MCF 10A (cell line): ENCODE measurements at regions of chr2 and their contacts with region 1.

Region 1: GRCh38 chr2:86368161-86368824 is 30.9 kb upstream of the REEP1 start:
- DNase-seq: peak; percentile 50
- H3K4me3 Mint-ChIP-seq: peak overlapping the region; percentile 12
- H3K27ac Mint-ChIP-seq: no peak overlapping the region
- H3K4me1 Mint-ChIP-seq: no peaks in the 10 kb centered on the region
- H3K27me3 Mint-ChIP-seq: no peaks in the 10 kb centered on the region
- CTCF ChIP-seq: peak; percentile 40

Region 2: DNA sequence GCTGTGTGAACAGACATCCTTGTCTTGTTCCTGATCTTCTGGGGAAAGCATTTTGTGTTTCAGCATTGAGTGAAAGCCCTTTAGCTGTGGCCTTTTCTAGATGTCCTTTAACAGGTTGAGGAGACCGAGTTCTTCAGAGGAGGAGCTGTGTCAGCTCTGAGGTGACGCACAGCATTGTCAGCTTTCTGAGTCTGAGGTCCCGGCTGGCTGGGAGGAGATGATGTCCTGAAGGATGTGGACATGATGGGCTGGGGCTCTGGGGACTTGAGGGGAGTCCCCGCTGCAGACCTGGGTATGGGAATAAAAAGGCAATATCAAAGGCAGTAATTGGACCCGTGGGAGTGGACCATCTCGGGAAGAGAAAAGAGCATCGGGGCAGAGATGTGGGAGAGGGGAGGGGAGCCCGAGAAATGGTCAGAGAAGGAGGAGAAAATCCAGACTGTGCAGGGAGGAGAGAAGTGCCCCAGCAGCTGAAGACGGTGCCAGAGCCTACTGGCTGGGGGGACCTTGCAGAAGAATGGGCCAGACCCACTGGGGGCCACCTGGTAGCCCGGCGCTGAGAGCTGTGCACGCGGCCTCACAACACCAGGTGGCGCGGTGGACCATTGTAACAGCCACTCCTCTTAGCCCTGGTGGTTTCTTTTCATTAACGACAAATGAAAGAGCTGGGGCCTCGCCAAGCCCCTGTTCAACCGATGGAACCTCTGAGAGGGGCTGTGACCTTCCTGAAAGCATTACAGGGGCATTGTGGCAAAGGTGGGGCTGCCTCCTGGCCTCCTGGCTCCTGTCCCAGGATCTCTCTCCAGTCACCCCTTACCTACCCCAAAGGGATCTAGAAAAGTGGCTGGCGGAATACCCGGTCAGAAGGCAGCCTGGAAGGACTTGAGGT is 541.1 kb before region 1 on chr2:
- CTCF ChIA-PET with region 1: no interaction called
- POLR2A ChIA-PET with region 1: no interaction called
- intact Hi-C with region 1: loop called (anchors 5 kb)
- DNase-seq: peak; percentile 74
- H3K4me3 Mint-ChIP-seq: no peak overlapping the region
- H3K27ac Mint-ChIP-seq: no peak overlapping the region
- H3K4me1 Mint-ChIP-seq: peaks cover 5% of the 10 kb centered on the region
- H3K27me3 Mint-ChIP-seq: peaks cover 7% of the 10 kb centered on the region
- CTCF ChIP-seq: peak; percentile 90

Region 3: DNA sequence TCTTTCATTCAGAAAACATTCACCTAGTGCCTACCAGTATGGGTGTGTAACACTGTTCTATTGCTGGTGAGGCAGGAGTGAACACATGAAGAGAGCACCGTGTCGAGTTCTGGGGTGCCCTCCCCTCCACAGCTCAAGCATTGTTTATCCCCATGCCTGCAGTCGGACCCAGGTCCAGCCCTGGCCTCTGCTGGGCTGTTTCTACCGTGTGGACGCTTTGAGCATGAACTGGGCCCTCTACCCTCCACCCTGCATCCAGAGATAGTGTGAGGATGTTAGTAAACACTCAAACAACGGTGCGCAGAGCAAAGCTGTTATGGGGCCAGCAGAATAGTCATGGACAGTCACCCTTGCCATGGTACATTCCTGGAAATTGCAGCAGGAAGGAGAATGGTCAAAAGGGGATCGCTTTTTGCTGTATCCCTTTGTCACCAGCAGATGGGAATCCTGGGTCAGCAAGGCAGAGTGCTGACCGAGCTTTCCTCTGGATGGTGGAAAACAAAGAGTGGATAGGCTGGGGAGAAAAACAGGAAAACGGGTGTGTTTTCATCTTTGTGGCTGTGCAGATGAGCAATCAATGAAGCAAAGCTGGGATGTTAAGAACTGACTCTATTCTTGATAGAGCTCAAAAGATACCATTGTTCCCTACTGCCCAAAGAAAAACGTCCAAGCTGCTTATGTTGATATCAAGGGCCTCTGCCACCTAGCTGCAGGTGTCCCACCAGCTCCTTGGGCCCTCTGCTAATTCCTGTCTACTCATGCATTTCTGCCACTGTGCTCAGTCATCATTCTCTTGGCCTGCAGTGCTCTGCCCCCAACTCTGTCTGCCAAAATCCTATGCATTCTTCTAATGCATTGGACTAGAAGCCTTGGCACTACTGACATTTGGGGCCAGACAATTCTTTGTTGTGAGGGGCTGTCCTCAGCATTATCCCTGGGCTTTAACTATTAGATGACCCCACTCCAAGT is 69.6 kb before region 1 on chr2:
- CTCF ChIA-PET with region 1: no interaction called
- POLR2A ChIA-PET with region 1: no interaction called
- intact Hi-C with region 1: loop called (anchors 10 kb)
- DNase-seq: no peak
- H3K4me3 Mint-ChIP-seq: no peak overlapping the region
- H3K27ac Mint-ChIP-seq: no peak overlapping the region
- H3K4me1 Mint-ChIP-seq: no peaks in the 10 kb centered on the region
- H3K27me3 Mint-ChIP-seq: peaks cover 10% of the 10 kb centered on the region
- CTCF ChIP-seq: peak; percentile 10

Region 4: GRCh38 chr2:86383844-86384243 is 15.6 kb after region 1 on chr2:
- CTCF ChIA-PET with region 1: interaction called, 14 read pairs
- POLR2A ChIA-PET with region 1: no interaction called
- intact Hi-C with region 1: no loop called
- DNase-seq: peak; percentile 90
- H3K4me3 Mint-ChIP-seq: no peak overlapping the region
- H3K27ac Mint-ChIP-seq: no peak overlapping the region
- H3K4me1 Mint-ChIP-seq: peaks cover 10% of the 10 kb centered on the region
- H3K27me3 Mint-ChIP-seq: peaks cover 21% of the 10 kb centered on the region
- CTCF ChIP-seq: no peak

Region 5: DNA sequence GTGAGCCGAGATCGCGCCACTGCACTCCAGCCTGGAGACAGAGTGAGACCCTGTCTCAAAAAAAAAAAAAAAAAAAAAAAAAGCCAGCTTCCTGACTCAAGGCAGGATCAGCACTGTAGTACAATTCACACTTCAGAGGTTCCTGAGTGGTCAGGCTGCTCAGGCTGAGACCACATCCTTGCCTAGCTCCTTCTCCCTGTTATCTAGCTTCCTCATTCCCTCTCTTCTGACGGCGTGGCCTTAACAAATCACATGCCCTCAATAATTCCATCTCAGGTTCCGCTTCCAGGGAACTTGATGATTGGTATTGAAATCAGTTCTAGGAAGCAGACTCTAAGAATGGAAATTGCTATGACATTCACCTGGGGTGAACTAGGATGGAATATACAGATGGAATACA is 43.1 kb after region 1 on chr2:
- CTCF ChIA-PET with region 1: no interaction called
- POLR2A ChIA-PET with region 1: no interaction called
- intact Hi-C with region 1: no loop called
- DNase-seq: no peak
- H3K4me3 Mint-ChIP-seq: no peak overlapping the region
- H3K27ac Mint-ChIP-seq: no peak overlapping the region
- H3K4me1 Mint-ChIP-seq: no peaks in the 10 kb centered on the region
- H3K27me3 Mint-ChIP-seq: peaks cover 14% of the 10 kb centered on the region
- CTCF ChIP-seq: no peak

Region 6: GRCh38 chr2:86454238-86454637 is 85.9 kb after region 1 on chr2:
- CTCF ChIA-PET with region 1: no interaction called
- POLR2A ChIA-PET with region 1: no interaction called
- intact Hi-C with region 1: no loop called
- DNase-seq: no peak
- H3K4me3 Mint-ChIP-seq: peak overlapping the region; percentile 44
- H3K27ac Mint-ChIP-seq: peak overlapping the region; percentile 84
- H3K4me1 Mint-ChIP-seq: peaks cover 19% of the 10 kb centered on the region
- H3K27me3 Mint-ChIP-seq: no peaks in the 10 kb centered on the region
- CTCF ChIP-seq: no peak

Region 7: DNA sequence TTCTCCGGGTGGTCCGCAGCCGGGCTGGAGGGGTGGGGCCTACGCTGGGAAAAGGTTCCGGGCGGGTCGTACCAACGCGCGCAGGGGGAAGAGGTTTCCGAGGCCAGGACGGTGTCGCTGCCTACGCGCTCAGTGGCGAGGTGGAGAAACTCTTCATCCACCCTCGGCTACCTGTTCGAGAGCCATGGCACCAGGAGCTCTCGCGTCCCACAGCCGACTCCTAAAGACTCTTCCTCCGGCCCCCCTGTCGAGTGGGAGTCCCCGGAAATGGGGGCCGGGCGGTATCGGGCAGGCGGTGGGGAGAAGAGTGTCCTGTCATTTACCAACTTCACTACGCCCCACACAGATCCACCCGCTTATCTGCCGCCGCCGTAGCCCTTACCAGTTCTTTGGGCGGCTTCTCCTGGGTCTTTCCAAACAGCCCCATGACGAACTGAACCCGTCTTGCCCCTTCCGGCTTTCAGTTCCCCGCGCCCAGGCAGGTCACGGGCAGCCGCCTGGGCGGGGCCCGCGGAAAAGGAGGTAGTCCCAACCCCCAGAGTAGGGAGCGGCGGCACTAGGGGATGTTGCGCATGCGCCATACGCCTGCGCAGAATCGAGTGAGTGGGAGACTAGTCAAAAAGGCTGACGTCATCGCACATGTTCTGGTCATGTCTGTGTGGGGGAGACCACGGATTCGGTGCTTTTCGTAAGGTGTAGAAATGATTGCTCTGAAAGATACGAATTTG is 194.8 kb after region 1 on chr2 and contains the start of gene CHMP3:
- CTCF ChIA-PET with region 1: no interaction called
- POLR2A ChIA-PET with region 1: no interaction called
- intact Hi-C with region 1: no loop called
- DNase-seq: peak; percentile 98
- H3K4me3 Mint-ChIP-seq: peak within 1 kb of the TSS; percentile 94
- H3K27ac Mint-ChIP-seq: peak within 1 kb of the TSS; percentile 100
- H3K4me1 Mint-ChIP-seq: peaks cover 26% of the 10 kb centered on the region
- H3K27me3 Mint-ChIP-seq: no peaks in the 10 kb centered on the region
- CTCF ChIP-seq: no peak
- total RNA-seq, gene CHMP3: 123 and 131 TPM in 2 replicates